ENCODE measurements at regions of chr1 and their contacts with region 1.

Region 1: DNA sequence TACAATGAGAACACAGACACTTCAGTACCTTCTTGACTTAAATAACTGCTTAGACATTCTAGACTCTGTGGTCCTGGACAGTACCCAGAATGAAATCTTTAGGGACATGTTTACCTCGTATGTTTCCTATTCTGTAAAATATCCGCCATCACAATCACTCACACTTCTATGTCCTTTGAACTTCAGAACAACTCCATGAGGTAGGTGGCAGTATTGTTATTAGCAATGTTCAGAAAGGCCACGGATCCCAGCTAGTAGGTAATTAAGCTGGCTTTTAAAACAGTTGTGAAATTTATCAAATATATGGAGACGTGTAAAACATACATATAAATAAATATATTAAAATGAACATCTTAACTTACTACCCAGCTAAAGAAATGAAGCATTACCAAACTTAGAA is 83.4 kb downstream of the CACHD1 start:
- DNase-seq: peak in 1 of 14 experiments; percentile 16
- ATAC-seq: no peak
- H3K4me3 ChIP-seq: no peak overlapping the region
- H3K4me3 Mint-ChIP-seq: no peak overlapping the region
- H3K27ac ChIP-seq: no peak overlapping the region
- H3K27ac Mint-ChIP-seq: peak overlapping the region; percentile 91
- H3K4me1 ChIP-seq: peaks cover 3% of the 10 kb centered on the region
- H3K4me1 Mint-ChIP-seq: peaks cover 58% of the 10 kb centered on the region
- H3K27me3 ChIP-seq: no peaks in the 10 kb centered on the region
- H3K27me3 Mint-ChIP-seq: no peaks in the 10 kb centered on the region
- CTCF ChIP-seq: peak; percentile 24

Region 2: GRCh38 chr1:64019818-64020217 is 533.5 kb before region 1 on chr1:
- CTCF ChIA-PET with region 1: no interaction called
- POLR2A ChIA-PET with region 1: no interaction called
- intact Hi-C with region 1: no loop called
- DNase-seq: peak in 3 of 14 experiments; percentile 29 to 34 (median 29)
- ATAC-seq: no peak
- H3K4me3 ChIP-seq: no peak overlapping the region
- H3K4me3 Mint-ChIP-seq: peak overlapping the region; percentile 34
- H3K27ac ChIP-seq: no peak overlapping the region
- H3K27ac Mint-ChIP-seq: peak overlapping the region; percentile 35
- H3K4me1 ChIP-seq: no peaks in the 10 kb centered on the region
- H3K4me1 Mint-ChIP-seq: peaks cover 25% of the 10 kb centered on the region
- H3K27me3 ChIP-seq: peaks cover 3 to 5% of the 10 kb centered on the region in 2 experiments
- H3K27me3 Mint-ChIP-seq: no peaks in the 10 kb centered on the region
- CTCF ChIP-seq: no peak

Region 3: GRCh38 chr1:64505232-64505943 is 47.9 kb before region 1 on chr1:
- CTCF ChIA-PET with region 1: no interaction called
- POLR2A ChIA-PET with region 1: no interaction called
- intact Hi-C with region 1: loop called in 1 of 2 experiments (anchors 5 kb)
- DNase-seq: peak; percentile 14 to 75 (median 53)
- ATAC-seq: peak; percentile 63
- H3K4me3 ChIP-seq: peak overlapping the region; percentile 47
- H3K4me3 Mint-ChIP-seq: peak overlapping the region; percentile 90
- H3K27ac ChIP-seq: peak overlapping the region in 1 of 2 donors; percentile 2
- H3K27ac Mint-ChIP-seq: peak overlapping the region; percentile 82
- H3K4me1 ChIP-seq: peaks cover 12% of the 10 kb centered on the region
- H3K4me1 Mint-ChIP-seq: peaks cover 60% of the 10 kb centered on the region
- H3K27me3 ChIP-seq: peaks cover 0 to 4% of the 10 kb centered on the region in 2 experiments
- H3K27me3 Mint-ChIP-seq: peaks cover 5% of the 10 kb centered on the region
- CTCF ChIP-seq: no peak

Region 4: GRCh38 chr1:64515427-64515826 is 37.9 kb before region 1 on chr1:
- CTCF ChIA-PET with region 1: no interaction called
- POLR2A ChIA-PET with region 1: interaction called, 3 read pairs
- intact Hi-C with region 1: loop called in 1 of 2 experiments (anchors 5 kb)
- DNase-seq: no peak
- ATAC-seq: no peak
- H3K4me3 ChIP-seq: no peak overlapping the region
- H3K4me3 Mint-ChIP-seq: no peak overlapping the region
- H3K27ac ChIP-seq: no peak overlapping the region
- H3K27ac Mint-ChIP-seq: no peak overlapping the region
- H3K4me1 ChIP-seq: no peaks in the 10 kb centered on the region
- H3K4me1 Mint-ChIP-seq: peaks cover 39% of the 10 kb centered on the region
- H3K27me3 ChIP-seq: no peaks in the 10 kb centered on the region
- H3K27me3 Mint-ChIP-seq: no peaks in the 10 kb centered on the region
- CTCF ChIP-seq: no peak

Region 5: GRCh38 chr1:64539781-64540218 is 13.5 kb before region 1 on chr1:
- CTCF ChIA-PET with region 1: no interaction called
- POLR2A ChIA-PET with region 1: interaction called, 4 read pairs
- intact Hi-C with region 1: loop called in 1 of 2 experiments (anchors 1 kb)
- DNase-seq: peak in 2 of 14 experiments; percentile 12 to 31
- ATAC-seq: no peak
- H3K4me3 ChIP-seq: no peak overlapping the region
- H3K4me3 Mint-ChIP-seq: no peak overlapping the region
- H3K27ac ChIP-seq: no peak overlapping the region
- H3K27ac Mint-ChIP-seq: peak overlapping the region; percentile 82
- H3K4me1 ChIP-seq: peaks cover 13% of the 10 kb centered on the region
- H3K4me1 Mint-ChIP-seq: peaks cover 70% of the 10 kb centered on the region
- H3K27me3 ChIP-seq: no peaks in the 10 kb centered on the region
- H3K27me3 Mint-ChIP-seq: no peaks in the 10 kb centered on the region
- CTCF ChIP-seq: no peak